Dorsolateral prefrontal cortex (tissue), 120 donors: ENCODE measurements at regions of chr9 and their contacts with region 1.

Region 1: DNA sequence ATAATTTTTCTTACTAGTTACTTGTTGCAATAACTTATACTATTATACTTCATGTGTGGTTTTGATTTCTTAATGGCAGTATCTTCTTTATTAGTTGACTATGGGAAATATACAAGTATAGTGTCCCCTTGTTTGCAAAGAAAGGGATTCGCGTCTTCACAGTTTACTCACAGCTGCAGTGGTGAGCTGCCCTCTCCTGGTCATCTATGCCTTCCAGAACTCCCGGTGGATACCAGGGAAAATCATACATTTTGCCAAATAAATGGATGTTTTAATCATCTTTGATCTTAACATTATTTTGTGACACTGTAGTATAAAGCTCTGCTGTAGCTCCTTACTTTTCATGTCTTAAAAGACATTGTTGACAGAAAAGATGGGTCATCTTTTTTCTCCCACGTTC is 142.0 kb downstream of the ZCCHC7 start:
- DNase-seq: peak in 3 of 10 donors; percentile 12 to 37 (median 22)
- H3K4me3 ChIP-seq: no peak overlapping the region
- H3K27ac ChIP-seq: no peak overlapping the region
- H3K27me3 ChIP-seq: no peaks in the 10 kb centered on the region
- CTCF ChIP-seq: peak in 54 of 56 donors; percentile 27 to 77 (median 58)

Region 2: GRCh38 chr9:36873247-36873875 is 389.0 kb before region 1 on chr9:
- intact Hi-C with region 1: loop called (anchors 5 to 10 kb)
- DNase-seq: peak in 8 of 10 donors; percentile 36 to 67 (median 50)
- H3K4me3 ChIP-seq: no peak overlapping the region
- H3K27ac ChIP-seq: no peak overlapping the region
- H3K27me3 ChIP-seq: peaks cover 0 to 6% (median 0%) of the 10 kb centered on the region in 45 donors
- CTCF ChIP-seq: peak; percentile 39 to 86 (median 77)

Region 3: GRCh38 chr9:36995927-36996705 is 266.3 kb before region 1 on chr9:
- intact Hi-C with region 1: loop called in 1 of 2 experiments (anchors 5 kb)
- DNase-seq: peak in 4 of 10 donors; percentile 12 to 57 (median 44)
- H3K4me3 ChIP-seq: peak overlapping the region in 1 of 59 donors; percentile 17
- H3K27ac ChIP-seq: no peak overlapping the region
- H3K27me3 ChIP-seq: peaks cover 0 to 54% (median 21%) of the 10 kb centered on the region in 45 donors
- CTCF ChIP-seq: peak in 50 of 56 donors; percentile 16 to 62 (median 40)

Region 4: GRCh38 chr9:37374892-37375291 is 112.5 kb after region 1 on chr9:
- intact Hi-C with region 1: no loop called
- DNase-seq: no peak
- H3K4me3 ChIP-seq: no peak overlapping the region
- H3K27ac ChIP-seq: no peak overlapping the region
- H3K27me3 ChIP-seq: no peaks in the 10 kb centered on the region
- CTCF ChIP-seq: no peak